Aorta (tissue), 5 donors: ENCODE measurements at regions of chr18 and their contacts with region 1.

Region 1: GRCh38 chr18:48934723-48935432 is 15.9 kb downstream of the SMAD7 start:
- DNase-seq: peak; percentile 84 to 87
- ATAC-seq: peak; percentile 27
- H3K4me3 ChIP-seq: no peak overlapping the region
- H3K27ac ChIP-seq: peak overlapping the region; percentile 70 to 87
- H3K4me1 ChIP-seq: peaks cover 3 to 7% of the 10 kb centered on the region in 2 donors
- H3K27me3 ChIP-seq: no peaks in the 10 kb centered on the region

Region 2: DNA sequence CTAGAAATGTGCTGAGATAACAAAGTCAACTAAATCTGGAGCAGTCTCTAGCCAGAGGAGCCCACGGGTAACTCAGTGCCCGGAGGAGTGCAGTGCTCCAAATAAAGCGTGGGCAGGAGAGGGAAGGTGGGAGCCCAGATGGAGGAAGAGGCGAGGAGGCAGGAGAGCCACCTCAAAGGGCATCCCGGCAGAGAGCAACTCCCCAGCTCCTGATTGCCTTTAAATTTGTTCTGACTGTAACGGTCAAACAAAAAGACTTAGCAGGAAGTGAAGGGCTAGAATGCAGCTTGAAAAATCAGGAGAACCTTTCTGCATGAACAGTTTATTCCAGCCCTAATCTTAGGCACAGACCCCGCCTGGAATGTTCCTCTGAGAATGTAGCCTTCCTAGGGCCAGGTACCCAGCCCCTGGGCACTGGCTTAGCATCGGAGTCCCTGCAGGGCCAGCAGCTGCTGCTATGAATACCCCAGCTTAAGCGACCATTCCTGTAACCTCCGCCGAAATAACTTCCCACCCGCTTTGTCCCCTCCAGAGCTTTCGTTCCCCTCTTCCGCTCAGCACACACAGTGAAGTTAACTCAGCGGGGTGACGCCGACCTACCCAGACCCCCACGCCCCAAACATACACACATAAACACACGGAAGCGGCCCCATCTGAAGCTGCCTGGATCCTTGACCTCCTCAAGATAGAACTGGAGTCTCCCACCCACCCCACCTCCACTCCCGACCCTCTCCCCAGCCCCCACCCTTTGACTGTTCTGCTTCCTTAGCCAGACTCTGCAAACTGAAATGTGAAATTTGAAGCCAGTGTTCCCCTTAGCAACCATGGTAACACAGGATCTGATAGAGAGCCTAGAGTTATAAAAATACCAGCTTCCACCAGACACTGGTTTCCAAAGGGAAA is 107.3 kb before region 1 on chr18:
- intact Hi-C with region 1: loop called in 1 of 2 experiments (anchors 5 kb)
- DNase-seq: peak; percentile 54 to 59
- ATAC-seq: peak; percentile 82
- H3K4me3 ChIP-seq: no peak overlapping the region
- H3K27ac ChIP-seq: peak overlapping the region; percentile 47 to 49
- H3K4me1 ChIP-seq: peaks cover 0 to 19% of the 10 kb centered on the region in 2 donors
- H3K27me3 ChIP-seq: no peaks in the 10 kb centered on the region

Region 3: DNA sequence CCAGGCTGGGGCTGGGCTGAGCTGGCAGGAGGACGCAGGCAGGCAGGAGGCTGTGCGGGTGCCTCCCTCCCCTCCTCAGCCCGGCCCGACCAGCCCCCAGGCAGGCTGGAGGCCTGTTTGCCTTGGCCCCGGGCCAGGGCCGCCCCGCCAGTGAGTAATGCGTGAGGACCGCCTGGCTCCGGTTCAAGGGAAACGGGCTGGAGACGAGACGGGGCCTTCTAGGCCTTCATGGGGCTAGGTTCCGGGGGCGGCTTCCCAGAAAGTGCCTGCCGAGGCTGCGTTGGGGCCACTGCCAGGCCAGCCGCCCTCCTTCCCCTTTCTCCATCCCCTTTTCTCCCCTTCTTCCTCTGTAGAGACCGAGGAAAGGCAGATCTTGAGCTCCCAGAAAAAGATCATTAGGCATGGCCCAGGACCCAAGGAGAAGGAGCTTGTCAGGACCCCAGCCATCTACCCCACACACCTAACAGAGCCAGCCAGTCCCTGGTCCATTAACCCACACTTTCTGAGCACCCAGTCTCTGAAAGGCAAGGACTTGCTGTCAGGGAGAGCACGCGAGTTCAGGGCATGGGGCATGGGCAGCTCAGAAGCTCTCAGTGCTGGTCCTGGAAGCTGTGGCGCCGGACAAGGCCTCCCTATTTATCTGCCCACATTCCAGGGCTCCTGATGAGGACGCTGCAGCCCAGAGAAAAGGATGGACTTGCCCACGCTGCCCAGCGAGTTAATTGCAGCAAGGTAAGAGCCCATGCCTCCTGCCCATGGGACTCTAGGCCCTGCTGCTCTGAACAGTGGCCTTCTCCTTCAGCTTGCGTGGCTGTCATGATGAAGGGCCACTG is 32.6 kb before region 1 on chr18:
- intact Hi-C with region 1: loop called in 1 of 2 experiments (anchors 5 kb)
- DNase-seq: peak; percentile 98
- ATAC-seq: peak; percentile 93
- H3K4me3 ChIP-seq: no peak overlapping the region
- H3K27ac ChIP-seq: peak overlapping the region; percentile 80 to 84
- H3K4me1 ChIP-seq: peaks cover 3 to 5% of the 10 kb centered on the region in 2 donors
- H3K27me3 ChIP-seq: no peaks in the 10 kb centered on the region